ENCODE measurements at regions of chr5 and their contacts with region 1.

Region 1: GRCh38 chr5:75236322-75237316 is at the start of gene ANKRD31:
- DNase-seq: peak; percentile 72
- H3K4me3 ChIP-seq: peak within 1 kb of the TSS; percentile 47 to 56
- H3K27ac ChIP-seq: peak within 1 kb of the TSS; percentile 65 to 66
- H3K4me1 ChIP-seq: no peaks in the 10 kb centered on the region
- H3K27me3 ChIP-seq: no peaks in the 10 kb centered on the region
- CTCF ChIP-seq: peak; percentile 91 to 98 (median 96)
- POLR2A ChIP-seq: peak; percentile 47
- total RNA-seq, gene ANKRD31: 0.41 to 3.7 TPM

Region 2: GRCh38 chr5:75053304-75054133 is 183.1 kb before region 1 on chr5:
- intact Hi-C with region 1: loop called (anchors 2 kb)
- DNase-seq: peak; percentile 33
- H3K4me3 ChIP-seq: peak overlapping the region; percentile 76 to 82
- H3K27ac ChIP-seq: peak overlapping the region; percentile 86
- H3K4me1 ChIP-seq: peaks cover 3% of the 10 kb centered on the region
- H3K27me3 ChIP-seq: no peaks in the 10 kb centered on the region
- CTCF ChIP-seq: peak in 1 of 4 experiments; percentile 36
- POLR2A ChIP-seq: no peak

Region 3: DNA sequence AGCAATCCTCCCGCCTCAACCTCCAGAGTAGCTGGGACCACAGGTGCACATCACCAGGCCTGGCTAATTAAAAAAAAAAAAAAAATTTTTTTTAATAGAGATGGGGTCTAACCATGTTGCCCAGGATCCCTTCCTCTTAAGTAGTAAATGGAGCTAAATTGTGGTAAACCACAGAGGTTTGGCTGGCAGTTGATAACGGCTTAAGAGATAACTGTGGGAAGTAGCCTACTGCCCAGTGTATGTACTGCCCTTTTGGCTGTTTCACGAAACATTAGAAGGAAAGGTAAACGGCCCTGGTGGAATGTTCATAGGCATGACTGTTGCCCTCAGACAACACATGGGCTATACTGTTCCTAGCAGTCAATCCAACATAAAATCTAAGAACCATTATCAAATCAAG is 144.8 kb after region 1 on chr5:
- intact Hi-C with region 1: no loop called
- DNase-seq: no peak
- H3K4me3 ChIP-seq: no peak overlapping the region
- H3K27ac ChIP-seq: no peak overlapping the region
- H3K4me1 ChIP-seq: no peaks in the 10 kb centered on the region
- H3K27me3 ChIP-seq: no peaks in the 10 kb centered on the region
- CTCF ChIP-seq: no peak
- POLR2A ChIP-seq: no peak

Region 4: DNA sequence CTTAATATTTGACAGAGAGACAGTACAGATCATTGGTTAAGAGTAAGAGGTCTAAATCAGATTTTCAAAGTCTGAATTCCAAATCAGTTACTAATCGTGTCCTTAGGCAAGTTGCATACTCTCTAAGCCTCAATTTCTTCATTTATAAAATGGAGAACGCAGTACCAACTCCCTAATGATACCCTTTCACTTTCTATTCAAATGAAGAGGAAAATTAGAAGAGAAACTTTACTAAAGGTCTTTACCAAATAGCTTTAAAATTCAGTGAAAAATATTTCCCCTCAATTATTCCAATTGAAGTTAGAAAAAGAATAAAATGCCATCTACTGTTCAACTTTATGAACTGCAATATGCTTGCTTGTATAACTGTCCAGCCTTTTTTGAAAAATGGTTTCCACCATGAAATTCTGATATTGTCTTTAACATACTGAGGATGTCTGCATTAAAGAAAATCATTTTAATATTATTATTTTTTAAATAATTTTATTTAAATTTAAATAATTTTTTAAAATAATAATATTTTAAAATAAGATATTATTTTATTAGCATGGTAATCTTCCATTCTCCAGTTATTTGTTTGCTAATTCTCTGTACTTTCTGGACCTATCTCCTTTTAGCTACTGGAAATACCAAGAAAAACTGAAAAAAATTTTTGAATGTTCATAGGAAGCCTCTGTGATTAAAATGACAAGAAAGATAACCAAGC is 444.7 kb after region 1 on chr5:
- intact Hi-C with region 1: loop called (anchors 2 kb)
- DNase-seq: no peak
- H3K4me3 ChIP-seq: no peak overlapping the region
- H3K27ac ChIP-seq: no peak overlapping the region
- H3K4me1 ChIP-seq: no peaks in the 10 kb centered on the region
- H3K27me3 ChIP-seq: no peaks in the 10 kb centered on the region
- CTCF ChIP-seq: peak; percentile 54 to 75 (median 66)
- POLR2A ChIP-seq: no peak

Measured in prostate gland (tissue), 2 donors.